Left ventricle myocardium superior (tissue), 1 donor: ENCODE measurements at regions of chr1 and their contacts with region 1.

Region 1: GRCh38 chr1:167687919-167688519 is 33.8 kb upstream of the MPZL1 start:
- DNase-seq: peak; percentile 35
- ATAC-seq: peak; percentile 45

Region 2: GRCh38 chr1:167599957-167600581 is 88.0 kb before region 1 on chr1:
- intact Hi-C with region 1: loop called (anchors 2 kb)
- DNase-seq: peak; percentile 34
- ATAC-seq: peak; percentile 86